ENCODE measurements at regions of chr21 and their contacts with region 1.

Region 1: DNA sequence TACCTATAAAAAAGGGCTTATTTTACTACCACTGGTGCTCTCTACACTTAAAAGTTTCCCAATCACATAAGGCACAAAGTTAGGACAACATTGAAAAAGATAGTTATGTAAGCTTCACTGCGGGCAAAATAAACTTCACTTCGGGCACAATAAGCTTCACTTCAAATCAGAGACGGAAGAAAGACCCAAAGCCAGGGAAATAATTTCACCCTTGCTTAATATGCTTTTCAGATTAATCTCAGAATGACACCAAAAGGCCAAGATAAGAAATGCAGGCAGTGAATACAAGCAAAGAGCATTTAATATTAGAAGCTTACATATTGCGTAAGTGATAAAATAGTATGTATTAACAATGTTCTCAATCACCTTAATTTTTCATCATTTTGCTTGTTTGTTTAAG is 444.2 kb downstream of the SETD4 start:
- DNase-seq: peak in 6 of 9 donors; percentile 2 to 44 (median 28)
- ATAC-seq: no peak
- H3K4me3 ChIP-seq: no peak overlapping the region
- H3K4me3 Mint-ChIP-seq: no peak overlapping the region
- H3K27ac ChIP-seq: no peak overlapping the region
- H3K27ac Mint-ChIP-seq: no peak overlapping the region
- H3K4me1 ChIP-seq: no peaks in the 10 kb centered on the region
- H3K4me1 Mint-ChIP-seq: peaks cover 0 to 6% (median 3%) of the 10 kb centered on the region in 7 donors
- H3K27me3 ChIP-seq: no peaks in the 10 kb centered on the region
- H3K27me3 Mint-ChIP-seq: peaks cover 0 to 11% (median 0%) of the 10 kb centered on the region in 5 donors

Region 2: GRCh38 chr21:34693192-34693810 is 922.8 kb before region 1 on chr21:
- CTCF ChIA-PET with region 1: interaction called, 4 read pairs
- POLR2A ChIA-PET with region 1: no interaction called
- intact Hi-C with region 1: loop called in 1 of 2 experiments (anchors 1 kb)
- DNase-seq: peak in 7 of 9 donors; percentile 33 to 63 (median 58)
- ATAC-seq: peak; percentile 72
- H3K4me3 ChIP-seq: no peak overlapping the region
- H3K4me3 Mint-ChIP-seq: no peak overlapping the region
- H3K27ac ChIP-seq: no peak overlapping the region
- H3K27ac Mint-ChIP-seq: no peak overlapping the region
- H3K4me1 ChIP-seq: no peaks in the 10 kb centered on the region
- H3K4me1 Mint-ChIP-seq: peaks cover 0 to 10% (median 3%) of the 10 kb centered on the region in 7 donors
- H3K27me3 ChIP-seq: peaks cover 0 to 4% of the 10 kb centered on the region in 2 donors
- H3K27me3 Mint-ChIP-seq: peaks cover 2 to 43% (median 10%) of the 10 kb centered on the region in 5 donors

Region 3: DNA sequence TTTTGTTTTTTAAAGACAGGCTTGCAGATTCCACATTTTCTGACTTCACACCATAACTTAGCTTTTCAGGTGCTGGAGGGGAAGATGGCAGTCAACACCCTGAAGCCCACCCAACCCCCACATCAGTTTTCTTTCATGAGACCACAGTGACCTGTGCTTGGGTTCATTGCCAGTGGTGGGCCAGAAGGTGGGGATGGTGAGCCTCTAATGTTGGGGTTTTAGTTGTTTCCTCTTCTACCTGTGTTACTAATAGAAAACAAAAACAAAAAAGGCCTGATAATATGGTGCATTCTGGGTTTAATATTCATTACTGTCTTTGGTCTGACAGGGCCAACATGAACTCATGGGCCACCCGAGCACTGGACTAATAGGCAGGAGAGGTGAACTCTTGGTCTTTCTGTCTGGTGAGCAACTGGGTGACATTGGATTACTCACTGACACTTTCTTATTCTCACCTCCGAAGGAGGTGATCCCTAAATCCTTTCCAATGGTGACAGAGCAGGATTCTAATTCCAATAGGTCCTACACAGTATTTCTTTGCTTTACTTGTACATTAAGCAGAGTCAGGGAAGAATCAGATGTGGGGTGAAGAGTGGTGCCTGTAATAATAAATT is 814.5 kb before region 1 on chr21:
- CTCF ChIA-PET with region 1: no interaction called
- POLR2A ChIA-PET with region 1: no interaction called
- intact Hi-C with region 1: loop called in 1 of 2 experiments (anchors 2 kb)
- DNase-seq: no peak
- ATAC-seq: peak; percentile 48
- H3K4me3 ChIP-seq: no peak overlapping the region
- H3K4me3 Mint-ChIP-seq: no peak overlapping the region
- H3K27ac ChIP-seq: no peak overlapping the region
- H3K27ac Mint-ChIP-seq: peak overlapping the region in 8 of 9 donors; percentile 22 to 84 (median 68)
- H3K4me1 ChIP-seq: no peaks in the 10 kb centered on the region
- H3K4me1 Mint-ChIP-seq: peaks cover 18 to 44% (median 32%) of the 10 kb centered on the region in 7 donors
- H3K27me3 ChIP-seq: no peaks in the 10 kb centered on the region
- H3K27me3 Mint-ChIP-seq: no peaks in the 10 kb centered on the region

Region 4: DNA sequence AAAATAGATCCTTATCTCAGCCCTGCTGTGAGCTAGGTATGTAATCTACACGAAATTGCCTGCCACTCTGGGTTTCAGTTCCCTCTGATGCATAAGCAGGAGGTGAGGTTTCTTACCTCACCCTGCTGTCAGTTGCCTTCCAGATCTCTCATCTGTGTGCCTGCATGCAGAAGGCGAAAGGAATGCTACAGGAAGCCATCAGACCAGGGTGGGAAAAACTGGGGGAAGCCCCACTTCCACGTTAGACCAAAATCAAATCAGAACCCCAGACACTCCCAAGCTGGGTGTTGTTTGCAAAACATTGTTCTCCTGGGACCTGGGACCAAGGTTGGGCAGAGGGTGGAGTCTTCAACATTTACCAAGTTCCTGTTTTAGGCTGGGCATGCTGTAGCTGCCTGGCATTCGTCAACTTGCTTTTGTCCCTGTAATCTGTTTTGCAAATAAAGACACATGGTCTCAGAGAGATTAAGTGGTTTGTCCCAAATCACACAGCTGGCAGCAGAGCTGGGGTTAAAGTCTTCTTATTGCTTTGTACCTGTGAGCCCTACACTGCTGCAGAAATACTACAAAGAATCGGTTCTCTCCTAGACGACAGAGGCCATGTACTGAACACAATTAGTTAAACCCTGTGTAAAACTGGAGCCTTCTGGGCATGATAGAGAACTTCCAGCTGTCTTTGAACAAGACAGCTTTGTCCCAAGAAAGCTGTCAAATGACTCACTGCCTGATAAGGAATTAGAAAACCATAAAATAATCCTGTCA is 177.3 kb before region 1 on chr21:
- CTCF ChIA-PET with region 1: interaction called, 3 read pairs
- POLR2A ChIA-PET with region 1: no interaction called
- intact Hi-C with region 1: loop called in 1 of 2 experiments (anchors 2 kb)
- DNase-seq: peak in 7 of 9 donors; percentile 5 to 33 (median 10)
- ATAC-seq: peak; percentile 77
- H3K4me3 ChIP-seq: no peak overlapping the region
- H3K4me3 Mint-ChIP-seq: peak overlapping the region; percentile 48 to 79 (median 62)
- H3K27ac ChIP-seq: no peak overlapping the region
- H3K27ac Mint-ChIP-seq: peak overlapping the region; percentile 16 to 83 (median 72)
- H3K4me1 ChIP-seq: peaks cover 0 to 29% of the 10 kb centered on the region in 2 donors
- H3K4me1 Mint-ChIP-seq: peaks cover 15 to 42% (median 34%) of the 10 kb centered on the region in 7 donors
- H3K27me3 ChIP-seq: no peaks in the 10 kb centered on the region
- H3K27me3 Mint-ChIP-seq: peaks cover 0 to 18% (median 0%) of the 10 kb centered on the region in 5 donors